ENCODE measurements at regions of chr12 and their contacts with region 1.

Region 1: DNA sequence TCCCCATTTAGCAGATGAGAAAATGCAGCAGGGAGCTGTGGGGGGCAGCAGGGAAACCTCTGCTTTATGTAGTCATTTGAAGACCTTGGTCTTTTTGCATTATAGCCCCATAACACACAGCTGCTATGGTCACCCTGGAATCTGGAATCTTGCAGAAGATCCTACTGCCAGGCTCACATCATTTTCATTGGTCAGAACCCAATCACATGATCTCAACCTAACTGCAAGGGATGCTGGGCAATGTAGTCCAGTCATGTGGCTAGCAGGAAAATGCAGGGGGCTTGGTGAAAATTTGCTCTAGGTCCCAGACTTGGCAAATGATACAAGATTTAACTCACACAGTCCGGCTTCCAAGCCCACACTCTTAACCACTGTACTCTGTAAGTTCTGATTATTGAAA is 1028.7 kb downstream of the AACS start:
- DNase-seq: no peak
- H3K4me3 ChIP-seq: no peak overlapping the region
- H3K27ac ChIP-seq: no peak overlapping the region
- H3K4me1 ChIP-seq: no peaks in the 10 kb centered on the region
- H3K27me3 ChIP-seq: no peaks in the 10 kb centered on the region
- CTCF ChIP-seq: no peak
- EP300 ChIP-seq: no peak
- POLR2A ChIP-seq: no peak

Region 2: GRCh38 chr12:126171937-126172559 is 78.1 kb after region 1 on chr12:
- in situ Hi-C with region 1: no loop called
- intact Hi-C with region 1: loop called (anchors 2 kb)
- DNase-seq: no peak
- H3K4me3 ChIP-seq: no peak overlapping the region
- H3K27ac ChIP-seq: no peak overlapping the region
- H3K4me1 ChIP-seq: no peaks in the 10 kb centered on the region
- H3K27me3 ChIP-seq: no peaks in the 10 kb centered on the region
- CTCF ChIP-seq: no peak
- EP300 ChIP-seq: no peak
- POLR2A ChIP-seq: no peak

Measured in transverse colon (tissue), 4 donors.